ENCODE measurements at regions of chr10 and their contacts with region 1.

Region 1: GRCh38 chr10:59382831-59383295 is 20.5 kb upstream of the FAM13C start:
- DNase-seq: no peak
- H3K4me3 ChIP-seq: peak overlapping the region in 1 of 2 donors; percentile 9
- H3K27ac ChIP-seq: peak overlapping the region; percentile 74 to 77
- H3K4me1 ChIP-seq: peaks cover 0 to 12% of the 10 kb centered on the region in 2 donors
- H3K27me3 ChIP-seq: no peaks in the 10 kb centered on the region
- CTCF ChIP-seq: no peak

Region 2: DNA sequence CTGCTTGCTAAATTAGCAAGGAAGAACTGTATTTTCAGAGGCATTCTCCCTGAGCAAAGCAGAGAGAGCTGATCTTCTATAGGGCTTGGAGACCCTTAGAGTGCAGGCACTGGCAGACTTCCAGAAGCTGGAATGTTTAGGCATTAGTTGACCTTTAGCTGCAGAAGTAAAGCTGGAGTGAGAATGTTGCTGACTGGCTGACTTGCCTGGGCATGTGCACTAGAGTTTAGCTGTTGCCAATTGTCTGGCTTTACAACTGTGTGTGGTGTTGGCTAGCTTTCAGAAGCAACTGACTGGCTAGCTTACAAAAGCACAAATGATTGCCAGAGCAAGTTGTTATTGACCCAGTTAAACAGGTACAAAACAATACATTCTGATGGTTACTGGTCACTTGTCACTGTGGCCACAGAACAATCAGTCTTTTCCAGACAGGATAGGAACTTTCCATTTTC is 45.6 kb before region 1 on chr10:
- intact Hi-C with region 1: loop called (anchors 5 kb)
- DNase-seq: no peak
- H3K4me3 ChIP-seq: no peak overlapping the region
- H3K27ac ChIP-seq: peak overlapping the region; percentile 67 to 73
- H3K4me1 ChIP-seq: peaks cover 4 to 29% of the 10 kb centered on the region in 2 donors
- H3K27me3 ChIP-seq: no peaks in the 10 kb centered on the region
- CTCF ChIP-seq: no peak

Region 3: DNA sequence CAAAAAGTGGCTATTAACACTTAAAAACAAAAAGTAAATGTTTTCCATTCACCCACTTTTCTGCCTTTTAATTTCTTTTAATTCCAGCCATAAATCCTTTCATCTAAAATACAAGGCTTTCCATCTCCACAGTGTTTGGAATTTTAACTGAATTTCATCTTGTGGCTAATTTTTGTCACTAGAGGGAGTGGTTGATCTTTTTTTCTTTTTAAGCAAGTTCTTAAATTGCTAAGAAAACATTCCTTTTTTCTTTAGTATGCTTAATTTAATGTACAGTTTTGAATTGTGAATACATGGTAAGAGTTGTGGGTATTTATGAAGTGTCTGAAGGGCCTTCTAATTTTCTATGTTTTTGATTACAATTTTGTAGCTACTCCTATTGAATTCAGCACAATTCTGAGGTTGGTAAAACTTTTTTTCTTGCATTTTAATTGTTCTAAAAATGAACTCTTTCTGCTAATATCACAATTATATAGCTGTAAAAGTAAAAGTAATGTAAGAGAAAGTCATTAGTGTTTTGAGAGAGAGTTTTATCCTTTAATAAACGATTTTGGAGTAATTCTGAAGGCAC is 1061.7 kb after region 1 on chr10:
- intact Hi-C with region 1: no loop called
- DNase-seq: no peak
- H3K4me3 ChIP-seq: no peak overlapping the region
- H3K27ac ChIP-seq: peak overlapping the region; percentile 29 to 82
- H3K4me1 ChIP-seq: peaks cover 5 to 34% of the 10 kb centered on the region in 2 donors
- H3K27me3 ChIP-seq: no peaks in the 10 kb centered on the region
- CTCF ChIP-seq: peak; percentile 37 to 69 (median 53)

Measured in ascending aorta (tissue), 2 donors.